ENCODE measurements at regions of chr3 and their contacts with region 1.

Region 1: DNA sequence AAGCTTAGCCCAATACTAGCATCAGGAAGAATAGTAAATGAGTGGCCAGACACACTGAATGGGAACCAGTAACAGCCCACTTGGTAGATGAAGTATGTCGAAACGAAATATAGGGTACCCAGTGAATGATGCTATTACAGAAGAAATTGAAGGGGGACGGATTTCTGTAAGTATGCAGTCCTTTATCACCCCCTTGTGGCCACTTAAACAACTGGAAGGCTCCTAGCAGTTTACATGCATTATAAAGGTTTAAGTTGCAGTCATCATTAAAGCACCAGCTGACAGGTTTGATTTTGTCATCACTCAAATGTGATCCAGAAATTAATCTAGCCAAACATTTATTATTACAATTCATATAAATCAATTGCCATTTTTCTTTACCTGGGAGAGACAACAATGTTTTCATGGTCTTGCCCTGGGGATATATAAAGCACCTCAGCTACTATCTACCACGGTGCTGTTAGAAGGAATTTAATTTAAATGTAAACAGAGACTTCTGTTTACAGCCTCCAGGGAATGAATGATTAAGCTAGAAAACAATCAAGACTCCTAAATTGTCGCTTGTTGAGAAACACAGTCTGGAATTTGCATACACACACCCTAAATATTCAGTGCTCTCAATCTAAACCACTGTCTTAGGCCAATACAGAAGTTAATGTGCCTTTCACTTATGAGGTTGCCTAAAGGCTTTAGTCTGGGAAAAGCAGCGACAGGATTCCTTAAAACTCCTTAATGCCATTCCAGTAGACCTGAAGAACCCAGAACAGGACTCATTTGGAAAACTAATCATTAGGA is 7.8 kb downstream of the EIF1B start:
- DNase-seq: peak; percentile 71
- ATAC-seq: peak; percentile 79
- H3K4me3 ChIP-seq: no peak overlapping the region
- H3K27ac ChIP-seq: no peak overlapping the region
- H3K4me1 ChIP-seq: no peaks in the 10 kb centered on the region
- H3K27me3 ChIP-seq: 0 out of 2 replicates have a peak, but pooled peaks cover 2% of the 10 kb centered on the region
- CTCF ChIP-seq: peak; percentile 88
- POLR2A ChIP-seq: no peak
- RAD21 ChIP-seq: peak; percentile 86

Region 2: GRCh38 chr3:39541917-39542329 is 775.3 kb before region 1 on chr3:
- CTCF ChIA-PET with region 1: interaction called, 4 read pairs
- POLR2A ChIA-PET with region 1: no interaction called
- dilution Hi-C with region 1: no loop called
- in situ Hi-C with region 1: no loop called
- intact Hi-C with region 1: loop called (anchors 1 kb)
- DNase-seq: peak; percentile 8
- ATAC-seq: peak; percentile 53; the same call in 1 of the 2 replicates
- H3K4me3 ChIP-seq: no peak overlapping the region
- H3K27ac ChIP-seq: no peak overlapping the region
- H3K4me1 ChIP-seq: no peaks in the 10 kb centered on the region
- H3K27me3 ChIP-seq: no peaks in the 10 kb centered on the region
- CTCF ChIP-seq: peak; percentile 67
- POLR2A ChIP-seq: no peak
- RAD21 ChIP-seq: peak; percentile 60

Region 3: GRCh38 chr3:39707314-39707909 is 609.8 kb before region 1 on chr3:
- CTCF ChIA-PET with region 1: no interaction called
- POLR2A ChIA-PET with region 1: no interaction called
- dilution Hi-C with region 1: no loop called
- in situ Hi-C with region 1: no loop called
- intact Hi-C with region 1: loop called (anchors 5 kb)
- DNase-seq: peak; percentile 10
- ATAC-seq: peak; percentile 42; the same call in 1 of the 2 replicates
- H3K4me3 ChIP-seq: no peak overlapping the region
- H3K27ac ChIP-seq: no peak overlapping the region
- H3K4me1 ChIP-seq: no peaks in the 10 kb centered on the region
- H3K27me3 ChIP-seq: no peaks in the 10 kb centered on the region
- CTCF ChIP-seq: peak; percentile 53
- POLR2A ChIP-seq: no peak
- RAD21 ChIP-seq: no peak

Region 4: GRCh38 chr3:41690766-41691563 is 1373.7 kb after region 1 on chr3:
- CTCF ChIA-PET with region 1: no interaction called
- POLR2A ChIA-PET with region 1: no interaction called
- dilution Hi-C with region 1: no loop called
- in situ Hi-C with region 1: no loop called
- intact Hi-C with region 1: loop called (anchors 10 kb)
- DNase-seq: no peak
- ATAC-seq: no peak
- H3K4me3 ChIP-seq: no peak overlapping the region
- H3K27ac ChIP-seq: no peak overlapping the region
- H3K4me1 ChIP-seq: peaks cover 10% of the 10 kb centered on the region
- H3K27me3 ChIP-seq: no peaks in the 10 kb centered on the region
- CTCF ChIP-seq: no peak
- POLR2A ChIP-seq: no peak
- RAD21 ChIP-seq: no peak

Measured in IMR-90 (cell line).